Sigmoid colon (tissue), 7 donors: ENCODE measurements at regions of chr9 and their contacts with region 1.

Region 1: GRCh38 chr9:124040935-124041816 is 29.6 kb downstream of the LHX2 start:
- DNase-seq: no peak
- H3K4me3 ChIP-seq: peak overlapping the region in 3 of 4 donors; percentile 26 to 52 (median 50)
- H3K27ac ChIP-seq: no peak overlapping the region
- H3K4me1 ChIP-seq: peaks cover 0 to 26% (median 24%) of the 10 kb centered on the region in 4 donors
- H3K27me3 ChIP-seq: peaks cover 4 to 95% (median 66%) of the 10 kb centered on the region in 3 donors
- CTCF ChIP-seq: peak; percentile 52 to 98 (median 76)
- EP300 ChIP-seq: no peak
- POLR2A ChIP-seq: no peak

Region 2: GRCh38 chr9:123401879-123402513 is 639.2 kb before region 1 on chr9:
- intact Hi-C with region 1: loop called (anchors 5 kb)
- DNase-seq: no peak
- H3K4me3 ChIP-seq: peak overlapping the region in 1 of 4 donors; percentile 7
- H3K27ac ChIP-seq: peak overlapping the region in 3 of 4 donors; percentile 20 to 65 (median 50)
- H3K4me1 ChIP-seq: peaks cover 0 to 27% (median 12%) of the 10 kb centered on the region in 4 donors
- H3K27me3 ChIP-seq: no peaks in the 10 kb centered on the region
- CTCF ChIP-seq: peak; percentile 64 to 74 (median 69)
- EP300 ChIP-seq: no peak
- POLR2A ChIP-seq: no peak

Region 3: GRCh38 chr9:123544007-123544827 is 497.0 kb before region 1 on chr9:
- intact Hi-C with region 1: loop called (anchors 2 kb)
- DNase-seq: no peak
- H3K4me3 ChIP-seq: no peak overlapping the region
- H3K27ac ChIP-seq: no peak overlapping the region
- H3K4me1 ChIP-seq: peaks cover 0 to 4% (median 0%) of the 10 kb centered on the region in 4 donors
- H3K27me3 ChIP-seq: no peaks in the 10 kb centered on the region
- CTCF ChIP-seq: peak; percentile 39 to 75 (median 60)
- EP300 ChIP-seq: no peak
- POLR2A ChIP-seq: no peak

Region 4: DNA sequence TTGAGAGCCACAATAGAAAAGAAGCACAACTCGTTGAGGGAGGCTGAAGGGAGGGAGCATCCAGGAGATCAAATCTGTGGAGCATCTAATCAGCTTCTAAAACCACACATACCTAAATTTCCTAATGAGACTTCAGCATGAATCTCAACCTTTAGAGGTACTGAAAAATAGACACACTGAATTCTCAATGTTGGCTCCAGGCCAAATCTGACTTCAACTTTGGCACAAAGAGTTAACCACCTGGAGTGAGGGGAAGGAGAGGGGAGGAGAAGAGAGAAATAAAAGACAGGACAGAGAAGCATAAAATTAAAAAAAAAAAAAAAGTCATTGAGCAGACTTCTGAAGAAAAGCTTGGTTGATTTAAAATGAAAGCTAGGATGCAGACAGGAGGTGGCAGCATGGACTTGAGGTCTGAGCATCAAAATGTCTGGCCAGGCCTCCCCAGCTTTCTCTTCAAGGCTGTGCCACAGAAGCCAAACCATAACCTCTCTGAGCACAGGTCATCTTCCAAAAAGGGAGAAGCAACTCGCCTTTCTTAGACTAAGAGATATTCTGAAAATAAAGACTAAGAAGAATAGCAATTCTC is 316.9 kb before region 1 on chr9:
- intact Hi-C with region 1: loop called (anchors 2 kb)
- DNase-seq: no peak
- H3K4me3 ChIP-seq: no peak overlapping the region
- H3K27ac ChIP-seq: no peak overlapping the region
- H3K4me1 ChIP-seq: peaks cover 0 to 16% (median 13%) of the 10 kb centered on the region in 4 donors
- H3K27me3 ChIP-seq: no peaks in the 10 kb centered on the region
- CTCF ChIP-seq: peak in 1 of 4 experiments; percentile 19
- EP300 ChIP-seq: no peak
- POLR2A ChIP-seq: no peak

Region 5: GRCh38 chr9:123975871-123976270 is 65.3 kb before region 1 on chr9:
- intact Hi-C with region 1: no loop called
- DNase-seq: no peak
- H3K4me3 ChIP-seq: no peak overlapping the region
- H3K27ac ChIP-seq: no peak overlapping the region
- H3K4me1 ChIP-seq: no peaks in the 10 kb centered on the region
- H3K27me3 ChIP-seq: peaks cover 1 to 17% (median 3%) of the 10 kb centered on the region in 3 donors
- CTCF ChIP-seq: no peak
- EP300 ChIP-seq: no peak
- POLR2A ChIP-seq: no peak